Sciatic nerve (tissue), 2 donors: ENCODE measurements at regions of chr6 and their contacts with region 1.

Region 1: GRCh38 chr6:50889497-50889896 is 70.8 kb downstream of the TFAP2B start:
- DNase-seq: no peak
- ATAC-seq: no peak

Region 2: GRCh38 chr6:50807035-50807434 is 82.5 kb before region 1 on chr6:
- intact Hi-C with region 1: loop called (anchors 2 kb)
- DNase-seq: no peak
- ATAC-seq: no peak

Region 3: GRCh38 chr6:50862172-50862571 is 27.3 kb before region 1 on chr6:
- intact Hi-C with region 1: no loop called
- DNase-seq: no peak
- ATAC-seq: no peak